ENCODE measurements at regions of chr15 and their contacts with region 1.

Region 1: GRCh38 chr15:68672781-68673205 is 94.0 kb downstream of the CORO2B start:
- DNase-seq: no peak
- ATAC-seq: no peak
- H3K4me3 ChIP-seq: no peak overlapping the region
- H3K4me3 Mint-ChIP-seq: no peak overlapping the region
- H3K27ac ChIP-seq: no peak overlapping the region
- H3K27ac Mint-ChIP-seq: no peak overlapping the region
- H3K4me1 ChIP-seq: peaks cover 10 to 14% of the 10 kb centered on the region in 2 donors
- H3K4me1 Mint-ChIP-seq: peaks cover 12% of the 10 kb centered on the region
- H3K27me3 ChIP-seq: peaks cover 0 to 12% (median 0%) of the 10 kb centered on the region in 4 experiments
- H3K27me3 Mint-ChIP-seq: peaks cover 19% of the 10 kb centered on the region
- CTCF ChIP-seq: no peak

Region 2: DNA sequence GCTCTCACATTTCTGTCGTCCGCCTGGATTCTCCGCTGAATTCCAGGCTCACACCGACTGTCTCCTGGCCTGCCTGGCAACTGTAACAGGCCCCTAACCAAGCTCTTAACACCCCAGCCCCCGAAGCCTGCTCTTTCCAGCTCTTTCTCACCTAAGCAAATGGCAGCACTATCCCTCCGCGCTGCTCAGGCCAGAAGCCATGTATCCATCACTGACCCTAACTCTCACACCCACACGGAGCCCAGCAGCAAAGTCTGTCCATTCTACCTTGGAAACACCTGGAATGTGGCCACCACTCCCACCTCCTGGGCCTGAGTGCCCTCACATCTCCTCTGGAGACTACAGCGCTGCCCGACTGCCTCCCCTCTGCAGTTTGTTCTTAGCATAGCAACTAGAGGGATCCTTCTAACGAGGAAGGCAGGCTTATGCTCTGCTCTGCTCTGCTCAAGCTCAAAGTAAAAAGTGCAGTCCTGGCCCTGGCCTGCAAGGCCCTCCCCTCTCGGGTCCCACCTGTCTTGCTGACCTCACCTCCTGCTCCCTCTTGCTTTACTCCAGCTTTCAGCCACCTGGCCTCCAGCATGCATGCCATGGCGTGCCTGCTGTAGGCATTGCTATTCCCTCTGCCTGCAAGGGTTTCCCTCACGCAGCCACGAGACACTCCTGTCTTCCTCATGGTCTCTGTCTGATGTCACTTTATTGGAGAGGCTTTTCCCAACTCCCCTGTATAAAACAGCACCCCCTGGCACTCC is 368.0 kb before region 1 on chr15:
- CTCF ChIA-PET with region 1: interaction called, 4 read pairs
- POLR2A ChIA-PET with region 1: no interaction called
- intact Hi-C with region 1: loop called (anchors 5 kb)
- DNase-seq: no peak
- ATAC-seq: no peak
- H3K4me3 ChIP-seq: no peak overlapping the region
- H3K4me3 Mint-ChIP-seq: no peak overlapping the region
- H3K27ac ChIP-seq: no peak overlapping the region
- H3K27ac Mint-ChIP-seq: no peak overlapping the region
- H3K4me1 ChIP-seq: peaks cover 5 to 6% of the 10 kb centered on the region in 2 donors
- H3K4me1 Mint-ChIP-seq: peaks cover 9% of the 10 kb centered on the region
- H3K27me3 ChIP-seq: no peaks in the 10 kb centered on the region
- H3K27me3 Mint-ChIP-seq: peaks cover 9% of the 10 kb centered on the region
- CTCF ChIP-seq: no peak

Region 3: DNA sequence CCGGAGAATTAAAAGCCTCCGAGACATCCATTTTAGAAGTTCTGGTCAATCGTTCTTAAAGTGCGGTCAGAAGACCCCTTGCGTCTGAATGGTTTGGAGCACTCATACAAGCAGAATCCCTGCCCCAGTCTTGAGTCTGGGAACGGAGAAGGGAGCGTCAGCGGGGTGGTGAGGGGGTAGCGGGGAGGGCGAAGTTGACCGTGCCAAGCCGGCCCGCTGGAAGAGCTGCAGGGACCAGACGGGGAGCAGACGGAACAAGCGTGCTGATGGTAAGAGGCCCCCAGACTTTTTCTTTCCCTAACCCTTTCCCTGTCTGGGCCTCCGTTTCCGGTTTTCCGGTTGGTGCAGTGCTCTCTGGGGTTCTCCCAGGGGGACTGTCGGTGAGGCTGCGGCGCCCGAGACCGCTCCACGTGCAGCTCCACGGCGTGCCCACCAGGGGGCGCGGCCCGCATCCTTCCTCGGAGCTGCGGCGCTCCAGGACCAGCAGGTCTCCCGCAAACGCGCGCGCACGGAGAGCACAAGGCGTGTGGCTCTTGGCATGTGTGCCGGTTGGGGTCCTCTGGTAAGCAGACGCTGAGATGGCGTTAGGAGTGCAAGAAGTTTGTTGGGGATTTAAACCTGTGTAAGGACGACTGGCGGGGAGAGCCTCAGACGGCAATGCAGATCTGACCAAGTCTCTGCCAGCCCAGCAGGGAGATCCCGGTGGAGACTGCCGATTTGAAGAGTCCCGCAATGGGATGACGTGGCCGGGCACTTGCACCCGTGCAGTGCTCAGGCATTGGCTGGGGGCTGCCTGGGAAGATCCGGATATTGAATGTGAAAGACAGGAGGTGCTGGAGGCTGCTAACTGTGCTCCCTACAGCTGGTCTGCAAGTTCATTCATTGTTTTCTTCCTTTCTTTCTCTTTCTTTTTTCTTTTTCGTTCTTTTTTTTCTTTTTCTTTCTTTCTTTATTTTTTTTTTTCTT is 113.2 kb before region 1 on chr15:
- CTCF ChIA-PET with region 1: interaction called, 409 read pairs
- POLR2A ChIA-PET with region 1: interaction called, 3 read pairs
- intact Hi-C with region 1: loop called (anchors 1 kb)
- DNase-seq: peak; percentile 86
- ATAC-seq: peak; percentile 96
- H3K4me3 ChIP-seq: peak overlapping the region; percentile 33 to 58 (median 49)
- H3K4me3 Mint-ChIP-seq: peak overlapping the region; percentile 91
- H3K27ac ChIP-seq: no peak overlapping the region
- H3K27ac Mint-ChIP-seq: peak overlapping the region; percentile 46
- H3K4me1 ChIP-seq: peaks cover 25 to 34% of the 10 kb centered on the region in 2 donors
- H3K4me1 Mint-ChIP-seq: peaks cover 23% of the 10 kb centered on the region
- H3K27me3 ChIP-seq: peaks cover 0 to 30% (median 6%) of the 10 kb centered on the region in 4 experiments
- H3K27me3 Mint-ChIP-seq: peaks cover 43% of the 10 kb centered on the region
- CTCF ChIP-seq: peak; percentile 95

Region 4: DNA sequence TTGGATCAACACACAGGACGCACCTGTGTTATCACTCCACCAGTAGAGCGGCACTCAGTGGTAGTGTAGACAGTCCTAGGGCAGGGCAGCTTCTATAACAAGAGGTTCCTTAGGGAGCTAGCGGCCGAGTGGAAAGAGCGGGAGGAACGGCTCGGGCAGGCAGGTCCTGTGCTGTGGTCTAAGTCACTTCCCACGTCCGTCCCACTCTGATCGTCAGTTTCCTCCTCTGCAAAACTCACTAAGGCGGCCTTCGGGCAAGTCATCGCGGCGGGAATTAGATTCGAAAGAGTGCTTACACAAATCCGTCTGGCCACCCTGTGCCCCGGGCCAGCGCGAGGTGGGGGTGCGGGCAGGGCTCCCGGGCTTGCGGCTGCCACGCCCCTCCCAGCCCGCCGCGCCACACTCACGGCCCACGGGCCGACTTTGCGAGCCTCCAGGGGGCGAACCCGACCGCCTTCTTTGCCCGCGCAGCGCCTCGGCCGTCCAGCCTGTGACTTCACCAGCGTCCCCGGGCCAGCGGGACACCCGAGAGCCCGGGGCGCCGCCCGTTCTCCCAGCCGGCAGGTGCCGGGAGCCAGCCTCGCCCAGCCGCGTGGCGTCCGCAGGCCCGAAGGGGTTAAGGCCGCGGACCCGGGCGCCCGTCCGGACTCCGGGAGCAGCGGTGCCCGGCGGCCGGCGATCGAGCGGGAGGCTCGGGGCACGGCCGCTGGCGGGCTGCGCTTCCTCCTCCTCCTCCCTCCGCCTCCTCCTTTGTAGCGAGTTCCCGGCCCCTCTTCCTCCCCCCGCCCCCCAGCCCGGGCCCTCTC is 94.4 kb before region 1 on chr15:
- CTCF ChIA-PET with region 1: interaction called, 19 read pairs
- POLR2A ChIA-PET with region 1: no interaction called
- intact Hi-C with region 1: loop called (anchors 1 kb)
- DNase-seq: peak; percentile 80
- ATAC-seq: peak; percentile 72
- H3K4me3 ChIP-seq: peak overlapping the region; percentile 54 to 77 (median 67)
- H3K4me3 Mint-ChIP-seq: peak overlapping the region; percentile 93
- H3K27ac ChIP-seq: peak overlapping the region; percentile 72 to 75
- H3K27ac Mint-ChIP-seq: peak overlapping the region; percentile 78
- H3K4me1 ChIP-seq: peaks cover 31 to 35% of the 10 kb centered on the region in 2 donors
- H3K4me1 Mint-ChIP-seq: peaks cover 44% of the 10 kb centered on the region
- H3K27me3 ChIP-seq: peaks cover 0 to 22% (median 3%) of the 10 kb centered on the region in 4 experiments
- H3K27me3 Mint-ChIP-seq: peaks cover 32% of the 10 kb centered on the region
- CTCF ChIP-seq: peak; percentile 49

Region 5: GRCh38 chr15:68637767-68638404 is 34.9 kb before region 1 on chr15:
- CTCF ChIA-PET with region 1: interaction called, 117 read pairs
- POLR2A ChIA-PET with region 1: interaction called, 5 read pairs
- intact Hi-C with region 1: no loop called
- DNase-seq: no peak
- ATAC-seq: no peak
- H3K4me3 ChIP-seq: no peak overlapping the region
- H3K4me3 Mint-ChIP-seq: no peak overlapping the region
- H3K27ac ChIP-seq: peak overlapping the region in 1 of 2 donors; percentile 1
- H3K27ac Mint-ChIP-seq: peak overlapping the region; percentile 13
- H3K4me1 ChIP-seq: peaks cover 43 to 49% of the 10 kb centered on the region in 2 donors
- H3K4me1 Mint-ChIP-seq: peaks cover 66% of the 10 kb centered on the region
- H3K27me3 ChIP-seq: no peaks in the 10 kb centered on the region
- H3K27me3 Mint-ChIP-seq: no peaks in the 10 kb centered on the region
- CTCF ChIP-seq: no peak

Region 6: DNA sequence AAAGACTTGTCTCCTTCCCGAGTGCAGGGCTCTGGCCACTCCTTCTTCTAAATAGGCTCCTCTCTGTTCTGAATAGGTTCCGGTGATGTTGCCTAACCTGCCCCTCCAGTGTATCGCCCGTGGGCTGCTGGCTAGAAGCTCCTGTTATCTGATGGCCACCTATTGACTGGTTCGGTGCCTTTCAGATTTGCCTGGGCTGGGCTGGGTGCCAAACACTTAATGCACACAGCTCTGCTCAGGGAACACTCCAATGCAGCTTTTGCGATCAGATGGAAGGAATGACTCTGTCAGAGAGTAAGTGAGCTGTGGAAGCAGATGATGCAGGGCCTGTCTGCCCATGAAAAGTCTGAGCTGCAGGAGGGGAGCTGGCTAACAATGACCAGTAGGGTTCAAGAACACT is 18.9 kb after region 1 on chr15:
- CTCF ChIA-PET with region 1: interaction called, 17 read pairs
- POLR2A ChIA-PET with region 1: no interaction called
- intact Hi-C with region 1: no loop called
- DNase-seq: no peak
- ATAC-seq: no peak
- H3K4me3 ChIP-seq: no peak overlapping the region
- H3K4me3 Mint-ChIP-seq: no peak overlapping the region
- H3K27ac ChIP-seq: no peak overlapping the region
- H3K27ac Mint-ChIP-seq: no peak overlapping the region
- H3K4me1 ChIP-seq: no peaks in the 10 kb centered on the region
- H3K4me1 Mint-ChIP-seq: no peaks in the 10 kb centered on the region
- H3K27me3 ChIP-seq: no peaks in the 10 kb centered on the region
- H3K27me3 Mint-ChIP-seq: peaks cover 8% of the 10 kb centered on the region
- CTCF ChIP-seq: no peak

Region 7: DNA sequence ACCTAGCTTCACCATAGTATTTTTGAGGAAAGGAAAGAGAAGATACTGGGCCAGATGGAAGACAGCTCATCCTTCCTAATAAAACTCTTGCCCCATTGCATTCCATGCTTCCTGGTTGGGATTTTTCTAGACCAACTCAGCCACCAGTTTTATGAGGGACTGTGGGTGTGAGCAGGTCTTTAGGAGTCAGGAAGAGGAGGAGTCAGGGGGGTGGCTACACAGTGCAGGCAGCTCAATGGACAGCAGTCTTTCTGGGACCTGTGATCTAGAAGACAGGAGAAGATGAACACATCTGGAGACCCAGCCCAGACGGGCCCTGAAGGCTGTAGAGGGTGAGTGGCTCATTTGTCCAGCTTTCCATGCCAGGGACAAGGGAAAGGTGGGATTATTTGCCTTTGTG is 341.7 kb after region 1 on chr15 and contains the start of gene NOX5:
- CTCF ChIA-PET with region 1: no interaction called
- POLR2A ChIA-PET with region 1: no interaction called
- intact Hi-C with region 1: no loop called
- DNase-seq: no peak
- ATAC-seq: no peak
- H3K4me3 ChIP-seq: no peak within 1 kb of the TSS
- H3K4me3 Mint-ChIP-seq: no peak within 1 kb of the TSS
- H3K27ac ChIP-seq: no peak within 1 kb of the TSS
- H3K27ac Mint-ChIP-seq: no peak within 1 kb of the TSS
- H3K4me1 ChIP-seq: no peaks in the 10 kb centered on the region
- H3K4me1 Mint-ChIP-seq: no peaks in the 10 kb centered on the region
- H3K27me3 ChIP-seq: no peaks in the 10 kb centered on the region
- H3K27me3 Mint-ChIP-seq: peaks cover 18% of the 10 kb centered on the region
- CTCF ChIP-seq: no peak
- total RNA-seq, gene NOX5: 0.05 TPM in 1 of 2 replicates, not detected in the other

Measured in B cell (primary cell).